Vagina (tissue), 2 donors: ENCODE measurements at regions of chrX and their contacts with region 1.

Region 1: GRCh38 chrX:101658661-101659491 is 774 bp downstream of the ARMCX2 start:
- DNase-seq: no peak
- H3K4me3 ChIP-seq: peak overlapping the region; percentile 52 to 59
- H3K27ac ChIP-seq: peak overlapping the region; percentile 80
- H3K4me1 ChIP-seq: peaks cover 9% of the 10 kb centered on the region
- H3K27me3 ChIP-seq: no peaks in the 10 kb centered on the region
- CTCF ChIP-seq: no peak
- POLR2A ChIP-seq: peak in 1 of 2 donors; percentile 51

Region 2: GRCh38 chrX:101685923-101686322 is 27.0 kb after region 1 on chrX:
- intact Hi-C with region 1: loop called (anchors 2 kb)
- DNase-seq: no peak
- H3K4me3 ChIP-seq: no peak overlapping the region
- H3K27ac ChIP-seq: no peak overlapping the region
- H3K4me1 ChIP-seq: no peaks in the 10 kb centered on the region
- H3K27me3 ChIP-seq: no peaks in the 10 kb centered on the region
- CTCF ChIP-seq: no peak
- POLR2A ChIP-seq: no peak